HCT116 (cell line): ENCODE measurements at regions of chr6 and their contacts with region 1.

Region 1: GRCh38 chr6:25788305-25788922 is 33.9 kb downstream of the SLC17A4 start:
- DNase-seq: peak; percentile 45
- ATAC-seq: peak; percentile 99
- H3K4me3 ChIP-seq: no peak overlapping the region
- H3K27ac ChIP-seq: no peak overlapping the region
- H3K4me1 ChIP-seq: no peaks in the 10 kb centered on the region
- H3K27me3 ChIP-seq: no peaks in the 10 kb centered on the region
- CTCF ChIP-seq: peak; percentile 44 to 75 (median 75); a peak in 5 of 6 replicates
- POLR2A ChIP-seq: no peak
- RAD21 ChIP-seq: peak; percentile 61

Region 2: DNA sequence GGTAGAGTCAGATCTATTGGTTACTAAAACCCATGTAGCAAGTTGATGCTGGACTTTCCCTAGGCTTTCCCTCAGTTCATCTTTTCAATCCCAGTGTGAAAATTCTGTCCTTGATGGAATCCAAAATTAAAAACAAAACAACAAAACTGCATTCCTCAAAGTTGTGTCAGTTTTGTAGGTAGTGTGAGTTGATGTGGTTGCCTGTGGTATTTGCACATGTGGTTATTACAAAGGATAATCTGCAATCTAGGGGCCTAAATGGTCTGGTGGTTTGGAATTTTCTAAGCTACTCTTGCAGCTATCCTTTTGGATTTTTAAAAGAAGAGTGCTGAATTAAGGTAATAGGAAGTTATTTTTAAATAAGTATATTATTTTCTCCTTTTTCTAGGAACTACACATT is 268.6 kb before region 1 on chr6:
- CTCF ChIA-PET with region 1: no interaction called
- POLR2A ChIA-PET with region 1: no interaction called
- RAD21 ChIA-PET with region 1: no interaction called
- intact Hi-C with region 1: no loop called
- DNase-seq: no peak
- ATAC-seq: no peak
- H3K4me3 ChIP-seq: no peak overlapping the region
- H3K27ac ChIP-seq: no peak overlapping the region
- H3K4me1 ChIP-seq: no peaks in the 10 kb centered on the region
- H3K27me3 ChIP-seq: no peaks in the 10 kb centered on the region
- CTCF ChIP-seq: no peak
- POLR2A ChIP-seq: no peak
- RAD21 ChIP-seq: no peak

Region 3: DNA sequence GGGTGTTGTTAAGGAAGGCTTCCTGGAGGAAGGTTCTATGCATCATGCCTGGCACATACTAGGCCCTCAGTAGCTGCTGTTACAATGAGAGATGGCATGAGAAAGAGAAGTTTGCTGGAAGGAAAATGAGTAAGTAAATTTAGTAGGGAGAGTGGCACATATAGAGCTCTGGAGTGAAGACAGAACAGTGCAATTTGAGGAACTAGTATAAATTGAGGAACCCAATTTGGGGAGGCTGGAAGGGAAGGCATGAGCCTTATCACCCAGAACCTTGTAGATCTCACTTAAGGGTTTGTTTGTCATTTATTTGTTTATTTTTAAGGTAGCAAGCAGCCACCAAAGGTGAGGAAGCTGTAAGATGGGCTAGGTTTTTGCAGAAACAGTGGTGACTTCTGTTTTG is 223.5 kb before region 1 on chr6:
- CTCF ChIA-PET with region 1: no interaction called
- POLR2A ChIA-PET with region 1: no interaction called
- RAD21 ChIA-PET with region 1: no interaction called
- intact Hi-C with region 1: no loop called
- DNase-seq: no peak
- ATAC-seq: no peak
- H3K4me3 ChIP-seq: no peak overlapping the region
- H3K27ac ChIP-seq: no peak overlapping the region
- H3K4me1 ChIP-seq: no peaks in the 10 kb centered on the region
- H3K27me3 ChIP-seq: no peaks in the 10 kb centered on the region
- CTCF ChIP-seq: no peak
- POLR2A ChIP-seq: no peak
- RAD21 ChIP-seq: no peak

Region 4: GRCh38 chr6:25889877-25890853 is 101.8 kb after region 1 on chr6:
- CTCF ChIA-PET with region 1: interaction called, 3 read pairs
- POLR2A ChIA-PET with region 1: no interaction called
- RAD21 ChIA-PET with region 1: no interaction called
- intact Hi-C with region 1: loop called (anchors 1 kb)
- DNase-seq: peak; percentile 27
- ATAC-seq: peak; percentile 91
- H3K4me3 ChIP-seq: no peak overlapping the region
- H3K27ac ChIP-seq: no peak overlapping the region
- H3K4me1 ChIP-seq: no peaks in the 10 kb centered on the region
- H3K27me3 ChIP-seq: no peaks in the 10 kb centered on the region
- CTCF ChIP-seq: peak; percentile 31 to 67 (median 59); a peak in 5 of 6 replicates
- POLR2A ChIP-seq: no peak
- RAD21 ChIP-seq: peak; percentile 86

Region 5: GRCh38 chr6:25942561-25943147 is 154.2 kb after region 1 on chr6:
- CTCF ChIA-PET with region 1: no interaction called
- POLR2A ChIA-PET with region 1: no interaction called
- RAD21 ChIA-PET with region 1: no interaction called
- intact Hi-C with region 1: loop called (anchors 2 kb)
- DNase-seq: peak; percentile 48
- ATAC-seq: peak; percentile 84
- H3K4me3 ChIP-seq: no peak overlapping the region
- H3K27ac ChIP-seq: no peak overlapping the region
- H3K4me1 ChIP-seq: no peaks in the 10 kb centered on the region
- H3K27me3 ChIP-seq: no peaks in the 10 kb centered on the region
- CTCF ChIP-seq: peak; percentile 42 to 73 (median 60); a peak in 4 of 6 replicates
- POLR2A ChIP-seq: no peak
- RAD21 ChIP-seq: peak; percentile 88

Region 6: GRCh38 chr6:26003102-26003694 is 214.8 kb after region 1 on chr6:
- CTCF ChIA-PET with region 1: no interaction called
- POLR2A ChIA-PET with region 1: no interaction called
- RAD21 ChIA-PET with region 1: no interaction called
- intact Hi-C with region 1: loop called (anchors 1 kb)
- DNase-seq: no peak
- ATAC-seq: peak; percentile 88
- H3K4me3 ChIP-seq: no peak overlapping the region
- H3K27ac ChIP-seq: no peak overlapping the region
- H3K4me1 ChIP-seq: no peaks in the 10 kb centered on the region
- H3K27me3 ChIP-seq: no peaks in the 10 kb centered on the region
- CTCF ChIP-seq: peak; percentile 51 to 72 (median 64); a peak in 5 of 6 replicates
- POLR2A ChIP-seq: no peak
- RAD21 ChIP-seq: peak; percentile 67